A549 (cell line): ENCODE measurements at regions of chr17 and their contacts with region 1.

Region 1: DNA sequence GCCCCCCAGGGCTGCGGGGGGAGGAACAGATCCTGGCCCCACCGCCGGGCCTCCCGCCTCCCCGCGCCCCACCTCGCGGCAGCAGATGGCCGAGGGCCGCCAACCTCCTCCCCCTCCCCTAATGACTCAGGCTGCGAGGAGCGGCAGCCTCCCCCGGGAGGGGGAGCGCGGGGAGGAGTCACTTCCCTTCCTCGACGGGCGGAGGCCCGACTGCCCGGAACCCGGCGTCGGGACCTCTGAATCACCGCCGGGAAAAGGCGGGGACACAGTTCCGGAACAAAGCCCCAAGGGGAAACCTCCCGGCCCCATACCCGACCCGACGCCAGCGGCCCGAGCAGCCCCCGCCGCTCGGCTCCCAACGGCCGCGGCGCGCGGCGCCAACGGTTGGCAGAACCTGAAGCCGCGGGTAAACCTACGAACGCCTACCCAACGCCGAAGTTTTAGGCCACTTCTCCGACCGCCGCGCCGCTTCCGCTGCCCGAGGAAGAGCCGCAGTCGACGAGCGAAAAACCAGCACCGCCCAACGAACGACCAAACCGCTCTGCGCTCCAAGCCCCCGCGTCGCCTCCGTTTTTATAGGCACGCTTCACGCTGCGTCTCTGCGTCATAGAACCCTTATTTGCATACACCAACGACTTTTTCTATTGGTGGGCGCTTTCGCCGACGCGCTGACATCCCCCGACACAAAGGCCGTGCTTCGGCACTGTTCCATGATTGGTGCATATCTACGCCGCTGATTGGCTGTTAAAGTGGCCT is 5.2 kb upstream of the UNK start:
- DNase-seq: peak; percentile 100
- ATAC-seq: peak; percentile 55 to 82
- H3K4me3 ChIP-seq: peak overlapping the region; percentile 69
- H3K27ac ChIP-seq: peak overlapping the region; percentile 93 to 95
- H3K4me1 ChIP-seq: peaks cover 41% of the 10 kb centered on the region
- CTCF ChIP-seq: no peak; the same call in 2 of the 3 replicates
- EP300 ChIP-seq: no peak
- POLR2A ChIP-seq: peak; percentile 100
- RAD21 ChIP-seq: no peak

Region 2: GRCh38 chr17:75684924-75685323 is 94.5 kb before region 1 on chr17:
- CTCF ChIA-PET with region 1: interaction called, 3 read pairs
- POLR2A ChIA-PET with region 1: interaction called, 11 read pairs
- DNase-seq: peak in 1 of 2 experiments; percentile 82
- ATAC-seq: peak; percentile 9 to 69; a peak in 4 of 6 replicates
- H3K4me3 ChIP-seq: no peak overlapping the region
- H3K27ac ChIP-seq: peak overlapping the region; percentile 86 to 93
- H3K4me1 ChIP-seq: peaks cover 95% of the 10 kb centered on the region
- CTCF ChIP-seq: no peak
- EP300 ChIP-seq: no peak
- POLR2A ChIP-seq: no peak
- RAD21 ChIP-seq: no peak

Region 3: DNA sequence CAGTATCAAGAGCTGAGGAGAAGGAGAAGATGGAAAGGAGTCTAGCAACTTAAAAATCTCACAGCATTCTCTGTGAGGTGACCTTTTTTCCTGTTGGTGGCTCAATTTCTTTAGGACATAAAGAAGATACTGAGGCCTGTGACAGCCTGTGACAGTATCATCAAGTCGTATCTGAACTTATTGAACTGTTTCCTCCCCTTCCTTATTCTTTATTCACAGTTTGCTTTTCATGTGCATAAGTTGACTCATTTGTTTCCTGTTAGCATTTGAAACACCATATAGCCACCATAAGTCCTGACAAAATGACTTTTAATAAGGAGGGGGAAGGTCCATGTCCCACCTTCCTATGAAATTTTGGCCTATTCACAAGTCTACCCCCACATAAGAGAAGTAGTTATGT is 14.1 kb after region 1 on chr17:
- CTCF ChIA-PET with region 1: interaction called, 72 read pairs
- POLR2A ChIA-PET with region 1: interaction called, 19 read pairs
- DNase-seq: no peak
- ATAC-seq: no peak
- H3K4me3 ChIP-seq: no peak overlapping the region
- H3K27ac ChIP-seq: no peak overlapping the region
- H3K4me1 ChIP-seq: 0 out of 3 replicates have a peak, but pooled peaks cover 3% of the 10 kb centered on the region
- CTCF ChIP-seq: no peak
- EP300 ChIP-seq: no peak
- POLR2A ChIP-seq: no peak
- RAD21 ChIP-seq: no peak

Region 4: GRCh38 chr17:75827252-75828115 is 48.1 kb after region 1 on chr17:
- CTCF ChIA-PET with region 1: interaction called, 17 read pairs
- POLR2A ChIA-PET with region 1: interaction called, 20 read pairs
- DNase-seq: peak; percentile 44 to 92
- ATAC-seq: peak; percentile 73 to 86; a peak in 5 of 6 replicates
- H3K4me3 ChIP-seq: no peak overlapping the region
- H3K27ac ChIP-seq: peak overlapping the region in 1 of 2 experiments; percentile 27; a peak in 2 of 6 replicates
- H3K4me1 ChIP-seq: peaks cover 5% of the 10 kb centered on the region; the same call in 1 of the 3 replicates
- CTCF ChIP-seq: peak; percentile 55
- EP300 ChIP-seq: no peak
- POLR2A ChIP-seq: no peak
- RAD21 ChIP-seq: peak; percentile 40 to 45; a peak in 3 of 5 replicates

Region 5: GRCh38 chr17:75872434-75873351 is 93.3 kb after region 1 on chr17:
- CTCF ChIA-PET with region 1: interaction called, 12 read pairs
- POLR2A ChIA-PET with region 1: interaction called, 52 read pairs
- DNase-seq: peak; percentile 82 to 87
- ATAC-seq: peak; percentile 7 to 52; a peak in 4 of 6 replicates
- H3K4me3 ChIP-seq: no peak overlapping the region
- H3K27ac ChIP-seq: peak overlapping the region; percentile 68 to 85
- H3K4me1 ChIP-seq: peaks cover 56% of the 10 kb centered on the region
- CTCF ChIP-seq: no peak
- EP300 ChIP-seq: no peak
- POLR2A ChIP-seq: no peak
- RAD21 ChIP-seq: no peak

Region 6: GRCh38 chr17:75940724-75941441 is 161.5 kb after region 1 on chr17 and contains the start of gene FBF1:
- CTCF ChIA-PET with region 1: no interaction called
- POLR2A ChIA-PET with region 1: no interaction called
- DNase-seq: peak; percentile 97 to 99
- ATAC-seq: peak; percentile 100
- H3K4me3 ChIP-seq: peak within 1 kb of the TSS; percentile 67
- H3K27ac ChIP-seq: peak within 1 kb of the TSS; percentile 82 to 94
- H3K4me1 ChIP-seq: peaks cover 5% of the 10 kb centered on the region; the same call in 1 of the 3 replicates
- CTCF ChIP-seq: no peak
- EP300 ChIP-seq: no peak
- POLR2A ChIP-seq: peak; percentile 96
- RAD21 ChIP-seq: no peak
- polyA plus RNA-seq, gene FBF1: 7.9 and 8.5 TPM in 2 replicates